ENCODE measurements at regions of chr1 and their contacts with region 1.

Region 1: DNA sequence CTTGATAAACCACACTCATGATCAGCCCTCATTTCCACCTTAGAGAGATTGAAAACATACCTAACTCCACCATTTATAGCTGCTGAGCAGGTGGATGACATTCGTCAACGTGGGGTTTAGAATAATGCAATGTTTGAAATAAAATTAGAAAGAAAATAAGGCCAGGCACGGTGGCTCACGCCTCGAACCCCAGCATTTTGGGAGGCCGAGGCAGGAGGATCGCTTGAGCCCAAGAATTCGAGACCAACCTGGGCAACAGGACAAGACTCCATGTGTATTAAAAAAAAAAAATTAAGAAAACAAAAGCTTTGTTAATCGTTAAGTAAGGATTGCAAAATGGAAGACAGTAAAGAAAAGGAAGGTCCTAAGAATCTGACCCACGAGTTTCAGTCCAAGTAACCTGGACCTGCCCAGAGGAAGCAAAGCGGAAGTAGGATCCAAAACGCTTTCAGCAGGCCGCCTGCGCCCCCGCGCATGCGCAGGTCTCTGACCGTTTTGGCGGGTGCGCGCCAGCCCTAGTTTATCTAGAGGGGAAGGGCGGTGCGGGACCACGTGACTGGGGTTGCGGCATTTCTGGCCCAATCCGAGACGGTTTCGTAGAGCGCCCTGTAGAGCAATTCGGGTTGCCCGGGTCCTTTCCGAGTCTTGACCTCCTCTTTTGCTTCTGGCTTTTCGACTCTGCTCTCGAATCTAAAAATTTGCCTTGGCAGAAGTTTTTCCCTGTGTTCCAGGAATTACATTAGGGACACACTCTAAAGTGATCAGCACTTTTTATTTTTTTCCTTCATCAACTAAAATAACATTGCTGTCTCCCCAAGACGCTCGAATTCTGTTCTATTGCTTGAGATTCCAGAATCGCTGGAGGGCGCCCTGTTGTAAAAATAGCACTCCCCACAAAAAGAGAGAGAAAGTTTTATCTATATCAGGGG is 22.5 kb downstream of the ANP32E start:
- DNase-seq: peak; percentile 88
- H3K4me3 ChIP-seq: peak overlapping the region; percentile 20 to 72 (median 38)
- H3K27ac ChIP-seq: peak overlapping the region; percentile 27
- H3K4me1 ChIP-seq: peaks cover 2% of the 10 kb centered on the region
- H3K27me3 ChIP-seq: no peaks in the 10 kb centered on the region
- CTCF ChIP-seq: peak; percentile 4 to 18
- POLR2A ChIP-seq: no peak

Region 2: GRCh38 chr1:149899460-149900293 is 313.8 kb before region 1 on chr1 and contains the start of gene BOLA1:
- CTCF ChIA-PET with region 1: no interaction called
- POLR2A ChIA-PET with region 1: no interaction called
- dilution Hi-C with region 1: no loop called
- intact Hi-C with region 1: loop called (anchors 1 kb)
- DNase-seq: peak; percentile 92
- H3K4me3 ChIP-seq: peak within 1 kb of the TSS in 2 of 3 experiments; percentile 12 to 55
- H3K27ac ChIP-seq: peak within 1 kb of the TSS; percentile 12
- H3K4me1 ChIP-seq: peaks cover 5% of the 10 kb centered on the region
- H3K27me3 ChIP-seq: no peaks in the 10 kb centered on the region
- CTCF ChIP-seq: no peak
- POLR2A ChIP-seq: peak; percentile 72
- total RNA-seq, gene BOLA1: 7.0 and 10.8 TPM in 2 replicates

Region 3: DNA sequence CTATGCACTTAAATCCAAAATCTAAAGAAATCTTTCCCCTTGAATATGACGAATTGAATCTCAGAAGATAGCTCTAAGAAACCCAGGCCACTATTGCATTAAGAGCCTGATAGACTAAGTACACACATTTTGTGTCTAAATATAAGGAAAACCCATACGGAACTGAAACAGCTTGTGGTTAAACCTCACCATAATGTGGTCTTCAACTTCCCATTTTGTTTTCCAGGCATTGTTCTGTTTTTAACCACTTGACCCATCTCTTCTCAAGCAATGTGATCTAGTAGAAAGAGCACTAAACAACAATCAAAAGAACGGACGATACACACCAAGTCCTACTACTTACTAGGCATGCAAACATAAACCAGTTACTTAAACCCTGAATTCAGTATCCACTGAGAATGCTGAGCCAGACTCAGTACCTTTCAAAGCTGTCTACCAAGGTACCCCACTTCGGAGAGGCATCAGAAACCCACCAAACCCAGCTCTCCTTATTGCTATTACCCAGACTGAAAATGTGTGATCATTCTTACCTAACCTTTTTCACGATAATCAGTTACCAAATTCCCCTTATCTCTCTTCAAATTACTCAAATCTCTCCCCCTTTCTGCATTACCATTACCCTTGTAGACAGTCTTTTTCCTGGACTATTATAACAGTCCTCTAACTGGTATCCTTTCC is 215.7 kb before region 1 on chr1:
- CTCF ChIA-PET with region 1: no interaction called
- POLR2A ChIA-PET with region 1: no interaction called
- dilution Hi-C with region 1: no loop called
- intact Hi-C with region 1: no loop called
- DNase-seq: no peak
- H3K4me3 ChIP-seq: no peak overlapping the region
- H3K27ac ChIP-seq: no peak overlapping the region
- H3K4me1 ChIP-seq: peaks cover 8% of the 10 kb centered on the region
- H3K27me3 ChIP-seq: no peaks in the 10 kb centered on the region
- CTCF ChIP-seq: no peak
- POLR2A ChIP-seq: no peak